ENCODE measurements at regions of chr16 and their contacts with region 1.

Region 1: DNA sequence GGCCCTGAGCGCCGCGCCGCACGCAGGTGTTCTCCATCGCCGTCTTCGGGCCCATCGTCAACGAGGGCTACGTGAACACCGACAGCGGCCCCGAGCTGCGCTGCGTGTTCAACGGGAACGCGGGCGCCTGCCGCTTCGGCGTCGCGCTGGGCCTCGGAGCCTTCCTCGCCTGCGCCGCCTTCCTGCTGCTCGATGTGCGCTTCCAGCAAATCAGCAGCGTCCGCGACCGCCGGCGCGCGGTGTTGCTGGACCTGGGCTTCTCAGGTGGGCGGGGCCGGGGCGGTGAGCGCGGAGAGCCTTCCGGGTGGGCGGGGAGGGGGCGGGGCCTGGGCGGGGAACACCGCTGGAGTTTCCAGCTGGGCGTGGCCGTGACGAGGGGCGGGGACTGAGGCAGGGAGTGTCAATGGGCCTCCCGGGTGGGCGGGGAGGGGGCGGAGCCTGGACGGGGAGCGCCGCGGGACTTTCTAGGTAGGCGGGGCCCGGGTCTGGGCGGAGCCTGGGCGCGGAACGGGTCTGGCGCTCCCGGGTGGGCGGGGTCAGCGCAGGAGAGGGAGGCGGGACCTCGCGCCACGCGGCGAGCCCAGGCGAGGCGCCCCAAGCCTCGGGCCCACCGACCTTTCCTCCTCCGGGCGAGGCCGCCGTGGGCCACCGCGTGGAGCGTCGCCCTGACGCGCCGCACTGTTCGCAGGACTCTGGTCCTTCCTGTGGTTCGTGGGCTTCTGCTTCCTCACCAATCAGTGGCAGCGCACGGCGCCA is 2.4 kb downstream of the SYNGR3 start:
- DNase-seq: peak; percentile 100
- ATAC-seq: peak; percentile 70
- H3K4me3 Mint-ChIP-seq: peak overlapping the region; percentile 56
- H3K27ac Mint-ChIP-seq: no peak overlapping the region
- H3K4me1 Mint-ChIP-seq: peaks cover 27% of the 10 kb centered on the region
- H3K27me3 Mint-ChIP-seq: peaks cover 15% of the 10 kb centered on the region

Region 2: GRCh38 chr16:1884155-1884760 is 107.9 kb before region 1 on chr16:
- CTCF ChIA-PET with region 1: no interaction called
- POLR2A ChIA-PET with region 1: no interaction called
- intact Hi-C with region 1: no loop called
- DNase-seq: peak; percentile 27
- ATAC-seq: peak; percentile 44
- H3K4me3 Mint-ChIP-seq: no peak overlapping the region
- H3K27ac Mint-ChIP-seq: no peak overlapping the region
- H3K4me1 Mint-ChIP-seq: no peaks in the 10 kb centered on the region
- H3K27me3 Mint-ChIP-seq: peaks cover 6% of the 10 kb centered on the region

Region 3: GRCh38 chr16:1964506-1965395 is 27.4 kb before region 1 on chr16 and contains the start of gene RPS2:
- CTCF ChIA-PET with region 1: no interaction called
- POLR2A ChIA-PET with region 1: interaction called, 13 read pairs
- intact Hi-C with region 1: loop called (anchors 1 kb)
- DNase-seq: peak; percentile 100
- ATAC-seq: peak; percentile 81
- H3K4me3 Mint-ChIP-seq: peak within 1 kb of the TSS; percentile 96
- H3K27ac Mint-ChIP-seq: peak within 1 kb of the TSS; percentile 99
- H3K4me1 Mint-ChIP-seq: peaks cover 38% of the 10 kb centered on the region
- H3K27me3 Mint-ChIP-seq: no peaks in the 10 kb centered on the region
- total RNA-seq, gene RPS2: 5,351 to 6,287 TPM

Region 4: GRCh38 chr16:1971796-1972489 is 20.2 kb before region 1 on chr16 and contains the start of gene TBL3:
- CTCF ChIA-PET with region 1: no interaction called
- POLR2A ChIA-PET with region 1: no interaction called
- intact Hi-C with region 1: loop called (anchors 1 to 2 kb)
- DNase-seq: peak; percentile 98
- ATAC-seq: peak; percentile 97
- H3K4me3 Mint-ChIP-seq: peak within 1 kb of the TSS; percentile 99
- H3K27ac Mint-ChIP-seq: peak within 1 kb of the TSS; percentile 99
- H3K4me1 Mint-ChIP-seq: peaks cover 16% of the 10 kb centered on the region
- H3K27me3 Mint-ChIP-seq: no peaks in the 10 kb centered on the region
- total RNA-seq, gene TBL3: 47.4 to 48.6 TPM

Region 5: GRCh38 chr16:2003827-2004641 is 11.9 kb after region 1 on chr16:
- CTCF ChIA-PET with region 1: interaction called, 12 read pairs
- POLR2A ChIA-PET with region 1: interaction called, 4 read pairs
- intact Hi-C with region 1: loop called (anchors 1 to 2 kb)
- DNase-seq: peak; percentile 95
- ATAC-seq: peak; percentile 93
- H3K4me3 Mint-ChIP-seq: no peak overlapping the region
- H3K27ac Mint-ChIP-seq: no peak overlapping the region
- H3K4me1 Mint-ChIP-seq: peaks cover 38% of the 10 kb centered on the region
- H3K27me3 Mint-ChIP-seq: no peaks in the 10 kb centered on the region

Region 6: DNA sequence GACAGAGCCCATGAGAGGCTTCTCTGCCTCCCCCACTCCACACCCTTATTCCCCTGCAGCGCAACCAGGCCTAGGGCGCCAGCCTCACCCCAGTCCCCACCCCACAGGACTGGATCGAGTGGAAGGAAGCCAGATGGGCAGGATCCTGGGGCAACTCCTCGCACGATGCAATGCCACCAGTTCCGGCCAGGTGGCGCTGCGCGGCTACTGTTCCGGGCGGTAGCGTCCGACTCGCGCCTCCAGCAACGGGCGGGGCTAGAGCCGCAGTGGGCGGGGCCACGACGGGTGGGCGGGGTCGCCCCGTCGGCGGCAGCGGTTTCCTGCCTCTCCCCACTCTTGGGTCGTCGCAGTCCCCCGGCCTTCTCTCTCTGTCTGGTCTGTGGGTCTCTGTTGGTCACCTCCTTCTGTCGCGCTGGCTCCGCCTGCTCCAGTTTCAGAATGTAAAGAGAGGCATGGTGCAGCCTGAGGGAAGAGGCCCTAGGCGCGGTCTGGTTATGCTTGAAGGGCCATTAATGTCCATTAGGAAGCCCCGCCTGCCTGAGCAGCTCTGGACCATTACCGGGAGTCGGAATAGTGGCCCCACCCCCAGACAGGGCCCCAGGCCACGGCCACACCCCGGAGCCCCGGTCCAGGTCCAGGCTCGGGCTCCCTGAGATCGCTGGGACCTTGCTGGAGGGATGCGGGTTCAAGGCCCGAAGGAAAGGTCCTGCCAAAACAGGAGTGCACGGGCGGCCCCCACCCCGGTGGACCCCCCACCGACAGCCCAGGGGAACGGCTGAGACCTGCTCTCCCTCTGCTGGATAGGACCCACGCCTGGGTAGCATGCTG is 31.2 kb after region 1 on chr16:
- CTCF ChIA-PET with region 1: no interaction called
- POLR2A ChIA-PET with region 1: interaction called, 3 read pairs
- intact Hi-C with region 1: loop called in 1 of 2 experiments (anchors 1 kb)
- DNase-seq: peak; percentile 97
- ATAC-seq: peak; percentile 86
- H3K4me3 Mint-ChIP-seq: peak overlapping the region; percentile 46
- H3K27ac Mint-ChIP-seq: no peak overlapping the region
- H3K4me1 Mint-ChIP-seq: peaks cover 15% of the 10 kb centered on the region
- H3K27me3 Mint-ChIP-seq: peaks cover 27% of the 10 kb centered on the region

Region 7: GRCh38 chr16:2205104-2205966 is 213.2 kb after region 1 on chr16 and contains the start of gene MLST8:
- CTCF ChIA-PET with region 1: no interaction called
- POLR2A ChIA-PET with region 1: no interaction called
- intact Hi-C with region 1: loop called in 1 of 2 experiments (anchors 2 kb)
- DNase-seq: peak; percentile 92
- ATAC-seq: peak; percentile 84
- H3K4me3 Mint-ChIP-seq: peak within 1 kb of the TSS; percentile 83
- H3K27ac Mint-ChIP-seq: peak within 1 kb of the TSS; percentile 84
- H3K4me1 Mint-ChIP-seq: peaks cover 16% of the 10 kb centered on the region
- H3K27me3 Mint-ChIP-seq: no peaks in the 10 kb centered on the region
- total RNA-seq, gene MLST8: 61.3 to 76.1 TPM

Region 8: DNA sequence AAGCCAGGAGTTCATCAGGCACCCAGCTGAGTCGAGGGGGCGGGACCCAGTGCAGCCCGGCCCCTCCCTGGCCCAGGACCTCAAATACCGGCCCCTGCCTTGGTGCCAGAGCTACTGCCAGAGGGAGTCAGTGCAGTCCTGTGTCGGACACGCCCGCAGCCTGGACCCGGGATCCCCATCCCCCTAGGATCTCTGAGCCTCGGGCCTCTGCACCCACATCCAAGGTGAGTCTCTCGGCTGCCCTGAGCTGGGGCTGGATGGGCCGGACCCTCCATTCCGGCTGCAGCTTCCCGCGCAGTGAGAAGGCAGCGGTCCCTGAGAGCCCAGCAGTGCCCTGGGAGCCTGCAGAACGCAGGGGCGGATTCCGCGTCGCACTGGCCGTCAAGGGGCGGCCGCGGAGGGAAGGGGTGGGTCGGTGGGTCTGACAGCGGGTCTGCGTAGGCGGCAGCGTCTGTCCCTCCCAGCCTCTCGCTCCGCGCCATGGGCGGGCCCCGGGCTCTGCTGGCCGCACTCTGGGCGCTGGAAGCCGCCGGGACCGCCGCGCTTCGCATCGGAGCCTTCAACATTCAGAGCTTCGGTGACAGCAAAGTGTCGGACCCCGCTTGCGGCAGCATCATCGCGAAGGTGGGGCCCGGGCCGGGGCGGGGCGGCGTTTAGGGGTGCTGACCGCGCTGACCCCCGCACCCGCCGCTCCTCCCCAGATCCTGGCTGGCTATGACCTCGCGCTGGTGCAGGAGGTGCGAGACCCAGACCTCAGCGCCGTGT is 244.4 kb after region 1 on chr16 and contains the start of gene DNASE1L2:
- CTCF ChIA-PET with region 1: no interaction called
- POLR2A ChIA-PET with region 1: no interaction called
- intact Hi-C with region 1: no loop called
- DNase-seq: no peak
- ATAC-seq: peak; percentile 23
- H3K4me3 Mint-ChIP-seq: no peak within 1 kb of the TSS
- H3K27ac Mint-ChIP-seq: no peak within 1 kb of the TSS
- H3K4me1 Mint-ChIP-seq: peaks cover 2% of the 10 kb centered on the region
- H3K27me3 Mint-ChIP-seq: peaks cover 2% of the 10 kb centered on the region
- total RNA-seq, gene DNASE1L2: 0.51 to 0.55 TPM

Region 9: GRCh38 chr16:2513405-2514322 is 521.5 kb after region 1 on chr16 and contains the start of gene ATP6V0C:
- CTCF ChIA-PET with region 1: no interaction called
- POLR2A ChIA-PET with region 1: interaction called, 3 read pairs
- intact Hi-C with region 1: loop called in 1 of 2 experiments (anchors 10 kb)
- DNase-seq: peak; percentile 95
- ATAC-seq: peak; percentile 90
- H3K4me3 Mint-ChIP-seq: peak within 1 kb of the TSS; percentile 93
- H3K27ac Mint-ChIP-seq: peak within 1 kb of the TSS; percentile 95
- H3K4me1 Mint-ChIP-seq: peaks cover 44% of the 10 kb centered on the region
- H3K27me3 Mint-ChIP-seq: no peaks in the 10 kb centered on the region
- total RNA-seq, gene ATP6V0C: 91.7 to 130 TPM